OCI-LY7 (cell line): ENCODE measurements at regions of chr21 and their contacts with region 1.

Region 1: DNA sequence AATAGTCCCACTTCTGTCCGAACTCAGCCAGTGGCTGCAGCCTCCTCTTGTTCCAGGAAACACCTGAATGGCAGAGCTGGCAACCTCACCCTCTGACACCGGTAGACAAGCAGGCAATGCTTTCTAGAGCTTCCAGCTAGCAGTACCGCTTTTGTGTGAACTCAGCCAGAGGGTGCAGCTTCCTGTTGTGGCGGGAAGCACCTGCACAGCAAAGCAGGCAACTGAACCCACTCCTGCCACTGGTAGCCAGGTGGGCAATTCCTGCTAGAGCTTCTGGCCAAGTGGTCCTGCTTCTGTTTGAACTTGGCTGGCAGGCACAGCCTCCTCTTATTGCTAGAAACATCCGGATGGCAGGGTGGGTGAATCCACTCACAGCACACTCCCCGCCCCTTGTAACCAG is 40.1 kb upstream of the TMPRSS15 start:
- DNase-seq: peak; percentile 93
- H3K4me3 ChIP-seq: peak overlapping the region; percentile 45
- H3K27ac ChIP-seq: peak overlapping the region; percentile 85
- H3K4me1 ChIP-seq: peaks cover 20% of the 10 kb centered on the region
- CTCF ChIP-seq: no peak

Region 2: GRCh38 chr21:18382141-18382540 is 61.6 kb before region 1 on chr21:
- CTCF ChIA-PET with region 1: no interaction called
- POLR2A ChIA-PET with region 1: interaction called, 3 read pairs
- intact Hi-C with region 1: loop called (anchors 2 kb)
- DNase-seq: peak; percentile 78
- H3K4me3 ChIP-seq: peak overlapping the region; percentile 24
- H3K27ac ChIP-seq: peak overlapping the region; percentile 86
- H3K4me1 ChIP-seq: peaks cover 30% of the 10 kb centered on the region
- CTCF ChIP-seq: no peak

Region 3: DNA sequence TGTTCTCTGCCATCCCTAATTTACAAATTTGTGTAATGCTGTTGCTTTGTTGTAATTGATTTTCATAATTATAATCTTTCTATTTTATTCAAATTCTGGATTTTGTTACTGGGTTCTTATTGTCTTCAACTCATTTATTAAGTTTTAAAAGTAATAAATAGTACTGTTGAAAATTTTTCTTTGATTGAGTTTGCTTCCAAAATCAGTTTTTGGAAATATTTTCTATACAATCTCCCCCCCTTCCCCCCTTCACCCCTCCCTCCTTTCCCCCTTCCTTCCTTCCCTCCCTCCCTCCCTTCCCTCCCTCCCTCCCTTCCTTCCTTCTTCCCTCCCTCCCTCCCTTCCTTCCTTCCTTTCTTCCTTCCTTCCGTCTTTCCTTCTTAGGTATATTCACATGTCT is 34.1 kb before region 1 on chr21:
- CTCF ChIA-PET with region 1: no interaction called
- POLR2A ChIA-PET with region 1: interaction called, 5 read pairs
- intact Hi-C with region 1: loop called (anchors 5 kb)
- DNase-seq: no peak
- H3K4me3 ChIP-seq: no peak overlapping the region
- H3K27ac ChIP-seq: no peak overlapping the region
- H3K4me1 ChIP-seq: peaks cover 18% of the 10 kb centered on the region
- CTCF ChIP-seq: no peak

Region 4: GRCh38 chr21:18430341-18430740 is 13.4 kb before region 1 on chr21:
- CTCF ChIA-PET with region 1: no interaction called
- POLR2A ChIA-PET with region 1: interaction called, 19 read pairs
- intact Hi-C with region 1: no loop called
- DNase-seq: no peak
- H3K4me3 ChIP-seq: no peak overlapping the region
- H3K27ac ChIP-seq: no peak overlapping the region
- H3K4me1 ChIP-seq: no peaks in the 10 kb centered on the region
- CTCF ChIP-seq: no peak

Region 5: GRCh38 chr21:18460979-18461378 is 17.3 kb after region 1 on chr21:
- CTCF ChIA-PET with region 1: no interaction called
- POLR2A ChIA-PET with region 1: interaction called, 4 read pairs
- intact Hi-C with region 1: loop called (anchors 1 kb)
- DNase-seq: peak; percentile 92
- H3K4me3 ChIP-seq: peak overlapping the region; percentile 42
- H3K27ac ChIP-seq: peak overlapping the region; percentile 96
- H3K4me1 ChIP-seq: peaks cover 35% of the 10 kb centered on the region
- CTCF ChIP-seq: no peak